ENCODE measurements at regions of chr14 and their contacts with region 1.

Region 1: GRCh38 chr14:65356327-65356852 is 56.1 kb upstream of the FUT8 start:
- DNase-seq: peak; percentile 77
- H3K4me3 Mint-ChIP-seq: peak overlapping the region; percentile 34
- H3K27ac Mint-ChIP-seq: peak overlapping the region; percentile 78
- H3K4me1 Mint-ChIP-seq: peaks cover 61% of the 10 kb centered on the region
- H3K27me3 Mint-ChIP-seq: no peaks in the 10 kb centered on the region

Region 2: DNA sequence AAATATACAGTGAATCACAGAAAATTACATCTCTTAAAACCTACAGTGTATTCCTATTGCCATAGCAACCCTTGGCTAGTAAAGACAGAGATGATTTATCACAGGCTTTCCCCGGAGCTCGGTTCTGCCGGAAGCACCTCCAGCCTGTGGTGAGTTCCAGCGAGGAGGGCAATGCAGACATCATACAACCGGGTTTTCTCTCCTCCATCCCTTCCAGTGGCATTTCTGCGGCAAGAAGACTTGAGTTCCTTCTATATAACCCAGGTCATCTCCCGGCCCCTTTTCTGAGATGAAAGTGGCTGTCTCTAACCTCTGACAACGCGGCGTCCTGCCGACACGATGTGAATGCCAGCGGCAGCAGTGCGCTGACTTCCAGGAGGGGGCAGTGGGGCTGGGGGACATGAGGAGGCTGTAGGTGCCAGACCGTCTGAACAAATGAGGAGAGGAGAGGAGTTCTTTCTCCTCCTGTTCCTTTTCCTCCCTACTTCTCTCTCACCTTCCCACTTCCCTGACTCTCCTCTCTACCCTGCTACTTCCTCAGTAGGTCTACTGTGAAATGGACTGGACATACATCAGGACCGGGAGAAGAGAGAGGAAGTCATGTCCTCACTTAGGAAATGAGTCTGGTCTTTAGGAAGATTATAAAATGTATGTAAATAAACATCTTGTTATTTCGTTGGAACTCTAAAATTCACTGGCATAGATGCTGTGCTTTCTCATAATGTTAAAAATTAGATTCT is 185.5 kb before region 1 on chr14:
- intact Hi-C with region 1: loop called (anchors 5 kb)
- DNase-seq: peak; percentile 88
- H3K4me3 Mint-ChIP-seq: peak overlapping the region; percentile 78
- H3K27ac Mint-ChIP-seq: peak overlapping the region; percentile 82
- H3K4me1 Mint-ChIP-seq: peaks cover 36% of the 10 kb centered on the region
- H3K27me3 Mint-ChIP-seq: peaks cover 3% of the 10 kb centered on the region

Region 3: DNA sequence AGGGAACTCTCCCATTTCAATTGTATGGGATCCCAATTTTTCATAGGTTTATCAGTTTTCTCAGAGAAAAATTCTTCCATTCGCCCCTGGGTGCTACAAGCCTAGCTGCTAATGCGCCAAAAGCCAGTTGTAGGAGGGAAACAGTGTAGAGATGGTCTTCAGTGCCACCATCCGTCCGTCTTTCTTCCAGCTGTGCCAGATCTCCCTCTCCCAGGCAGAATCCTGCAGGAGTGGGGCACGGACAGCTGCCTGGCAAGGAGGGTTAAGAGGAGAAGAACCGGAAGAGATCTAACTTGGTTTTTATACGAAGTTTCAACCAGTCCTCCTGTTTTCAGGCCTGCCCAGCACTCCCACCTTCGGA is 17.3 kb after region 1 on chr14:
- intact Hi-C with region 1: loop called (anchors 1 kb)
- DNase-seq: no peak
- H3K4me3 Mint-ChIP-seq: no peak overlapping the region
- H3K27ac Mint-ChIP-seq: peak overlapping the region; percentile 70
- H3K4me1 Mint-ChIP-seq: peaks cover 43% of the 10 kb centered on the region
- H3K27me3 Mint-ChIP-seq: no peaks in the 10 kb centered on the region